ENCODE measurements at regions of chr12 and their contacts with region 1.

Region 1: DNA sequence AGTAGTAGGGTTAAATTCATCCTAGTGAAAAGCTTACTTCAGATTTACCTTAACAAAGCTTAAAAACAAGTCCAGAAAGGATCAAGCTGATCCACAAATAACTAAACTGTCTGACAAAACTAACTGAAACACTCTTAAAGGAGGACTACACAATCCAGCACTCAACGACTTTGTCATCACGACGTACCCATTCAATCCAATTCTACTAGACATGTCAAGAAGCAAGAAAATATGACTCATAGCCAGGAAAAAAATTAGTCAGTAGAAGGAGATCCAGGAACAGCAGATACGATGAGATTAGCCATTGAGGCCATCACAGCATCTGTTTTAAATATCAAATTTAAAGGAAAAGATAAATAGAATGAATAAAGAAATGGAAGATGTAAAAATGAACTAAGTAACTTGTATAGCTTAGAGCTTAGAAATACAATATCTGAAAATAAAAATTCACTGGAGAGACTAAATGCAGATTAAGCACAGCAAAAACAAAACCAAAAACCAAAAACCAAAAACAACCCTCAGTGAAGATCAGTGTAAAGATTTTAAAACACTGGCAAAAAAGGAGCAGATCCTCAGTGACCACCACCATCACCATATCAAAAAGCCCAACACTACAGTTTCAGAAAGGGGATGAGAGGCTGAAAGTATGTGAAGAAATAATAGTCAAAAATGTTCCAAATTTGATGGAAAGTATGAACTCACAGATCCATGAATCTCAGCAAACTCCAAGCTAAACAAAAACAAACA is 95.0 kb upstream of the CCND2 start:
- DNase-seq: no peak
- H3K4me3 Mint-ChIP-seq: peak overlapping the region; percentile 11
- H3K27ac Mint-ChIP-seq: peak overlapping the region; percentile 93
- H3K4me1 Mint-ChIP-seq: peaks cover 23% of the 10 kb centered on the region
- H3K27me3 Mint-ChIP-seq: no peaks in the 10 kb centered on the region

Region 2: GRCh38 chr12:4164559-4165558 is 13.7 kb before region 1 on chr12:
- intact Hi-C with region 1: loop called (anchors 1 kb)
- DNase-seq: peak; percentile 64
- H3K4me3 Mint-ChIP-seq: peak overlapping the region; percentile 84
- H3K27ac Mint-ChIP-seq: peak overlapping the region; percentile 95
- H3K4me1 Mint-ChIP-seq: peaks cover 68% of the 10 kb centered on the region
- H3K27me3 Mint-ChIP-seq: no peaks in the 10 kb centered on the region

Region 3: GRCh38 chr12:4191642-4192041 is 13.0 kb after region 1 on chr12:
- intact Hi-C with region 1: no loop called
- DNase-seq: no peak
- H3K4me3 Mint-ChIP-seq: no peak overlapping the region
- H3K27ac Mint-ChIP-seq: no peak overlapping the region
- H3K4me1 Mint-ChIP-seq: peaks cover 3% of the 10 kb centered on the region
- H3K27me3 Mint-ChIP-seq: no peaks in the 10 kb centered on the region

Region 4: GRCh38 chr12:4215229-4216186 is 36.9 kb after region 1 on chr12:
- intact Hi-C with region 1: loop called (anchors 2 kb)
- DNase-seq: peak; percentile 22
- H3K4me3 Mint-ChIP-seq: peak overlapping the region; percentile 46
- H3K27ac Mint-ChIP-seq: peak overlapping the region; percentile 70
- H3K4me1 Mint-ChIP-seq: peaks cover 46% of the 10 kb centered on the region
- H3K27me3 Mint-ChIP-seq: peaks cover 2% of the 10 kb centered on the region

Region 5: DNA sequence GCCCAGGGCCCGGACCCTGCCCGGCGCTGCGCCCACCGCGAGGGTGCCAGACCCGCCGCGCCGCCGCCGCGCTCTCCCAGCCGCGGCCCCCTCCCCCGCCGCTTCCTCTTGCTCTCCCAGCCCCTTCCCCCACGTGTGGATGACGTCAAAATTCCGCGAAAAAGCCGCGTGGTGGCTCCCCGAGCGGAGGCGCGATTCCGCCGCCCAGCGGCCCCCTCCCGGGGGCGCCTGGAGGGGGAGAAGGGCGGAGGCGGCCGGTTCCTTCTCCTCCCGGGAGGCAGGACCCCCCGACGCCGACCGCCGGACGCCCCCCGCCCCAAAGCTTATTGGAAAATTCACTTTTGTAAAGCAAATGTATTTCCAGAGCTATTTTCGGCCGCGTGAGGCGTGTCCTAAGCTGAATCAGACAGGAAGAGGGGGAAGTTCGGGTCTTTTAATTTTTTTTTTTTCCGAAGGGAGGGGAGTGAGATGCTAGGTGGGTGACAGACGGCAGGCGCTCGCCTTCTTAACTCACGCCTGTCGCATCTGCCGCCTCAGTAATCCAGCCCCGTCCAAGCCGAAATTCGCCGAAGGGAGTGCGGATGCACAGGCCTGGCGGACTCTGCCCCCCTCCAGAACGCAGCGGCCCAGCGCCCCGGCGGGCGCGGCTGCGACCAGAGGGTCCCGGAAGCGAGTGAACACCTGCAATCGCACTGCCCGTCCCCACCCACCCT is 90.8 kb after region 1 on chr12:
- intact Hi-C with region 1: loop called (anchors 1 kb)
- DNase-seq: peak; percentile 91
- H3K4me3 Mint-ChIP-seq: peak overlapping the region; percentile 95
- H3K27ac Mint-ChIP-seq: peak overlapping the region; percentile 90
- H3K4me1 Mint-ChIP-seq: peaks cover 26% of the 10 kb centered on the region
- H3K27me3 Mint-ChIP-seq: peaks cover 13% of the 10 kb centered on the region

Region 6: GRCh38 chr12:4449851-4450221 is 271.2 kb after region 1 on chr12:
- intact Hi-C with region 1: no loop called
- DNase-seq: no peak
- H3K4me3 Mint-ChIP-seq: no peak overlapping the region
- H3K27ac Mint-ChIP-seq: no peak overlapping the region
- H3K4me1 Mint-ChIP-seq: peaks cover 9% of the 10 kb centered on the region
- H3K27me3 Mint-ChIP-seq: peaks cover 23% of the 10 kb centered on the region

Region 7: GRCh38 chr12:4780641-4781625 is 602.3 kb after region 1 on chr12:
- intact Hi-C with region 1: no loop called
- DNase-seq: no peak
- H3K4me3 Mint-ChIP-seq: no peak overlapping the region
- H3K27ac Mint-ChIP-seq: no peak overlapping the region
- H3K4me1 Mint-ChIP-seq: no peaks in the 10 kb centered on the region
- H3K27me3 Mint-ChIP-seq: peaks cover 35% of the 10 kb centered on the region